ENCODE measurements at regions of chr15 and their contacts with region 1.

Region 1: GRCh38 chr15:89195836-89196235 is 25.5 kb downstream of the RLBP1 start:
- DNase-seq: no peak
- H3K4me3 Mint-ChIP-seq: no peak overlapping the region
- H3K27ac Mint-ChIP-seq: peak overlapping the region; percentile 41
- H3K4me1 Mint-ChIP-seq: peaks cover 26% of the 10 kb centered on the region
- H3K27me3 Mint-ChIP-seq: no peaks in the 10 kb centered on the region

Region 2: GRCh38 chr15:88859550-88859949 is 336.3 kb before region 1 on chr15:
- CTCF ChIA-PET with region 1: no interaction called
- intact Hi-C with region 1: no loop called
- DNase-seq: no peak
- H3K4me3 Mint-ChIP-seq: no peak overlapping the region
- H3K27ac Mint-ChIP-seq: no peak overlapping the region
- H3K4me1 Mint-ChIP-seq: no peaks in the 10 kb centered on the region
- H3K27me3 Mint-ChIP-seq: no peaks in the 10 kb centered on the region

Region 3: GRCh38 chr15:89177633-89178306 is 18.1 kb before region 1 on chr15:
- CTCF ChIA-PET with region 1: interaction called, 7 read pairs
- intact Hi-C with region 1: loop called (anchors 1 kb)
- DNase-seq: peak; percentile 86
- H3K4me3 Mint-ChIP-seq: no peak overlapping the region
- H3K27ac Mint-ChIP-seq: peak overlapping the region; percentile 94
- H3K4me1 Mint-ChIP-seq: peaks cover 46% of the 10 kb centered on the region
- H3K27me3 Mint-ChIP-seq: no peaks in the 10 kb centered on the region

Measured in activated naive CD4-positive, alpha-beta T cell treated with anti-CD3 and anti-CD28 coated beads for 36 hours (primary cell).